Ovary (tissue), 10 donors: ENCODE measurements at regions of chr3 and their contacts with region 1.

Region 1: GRCh38 chr3:142993958-142994442 is 7.4 kb upstream of the U2SURP start:
- DNase-seq: peak; percentile 19 to 69 (median 52)
- H3K4me3 ChIP-seq: no peak overlapping the region
- H3K27ac ChIP-seq: no peak overlapping the region
- H3K4me1 ChIP-seq: no peaks in the 10 kb centered on the region
- H3K27me3 ChIP-seq: no peaks in the 10 kb centered on the region
- CTCF ChIP-seq: peak in 2 of 3 donors; percentile 23 to 39
- EP300 ChIP-seq: no peak
- POLR2A ChIP-seq: no peak

Region 2: DNA sequence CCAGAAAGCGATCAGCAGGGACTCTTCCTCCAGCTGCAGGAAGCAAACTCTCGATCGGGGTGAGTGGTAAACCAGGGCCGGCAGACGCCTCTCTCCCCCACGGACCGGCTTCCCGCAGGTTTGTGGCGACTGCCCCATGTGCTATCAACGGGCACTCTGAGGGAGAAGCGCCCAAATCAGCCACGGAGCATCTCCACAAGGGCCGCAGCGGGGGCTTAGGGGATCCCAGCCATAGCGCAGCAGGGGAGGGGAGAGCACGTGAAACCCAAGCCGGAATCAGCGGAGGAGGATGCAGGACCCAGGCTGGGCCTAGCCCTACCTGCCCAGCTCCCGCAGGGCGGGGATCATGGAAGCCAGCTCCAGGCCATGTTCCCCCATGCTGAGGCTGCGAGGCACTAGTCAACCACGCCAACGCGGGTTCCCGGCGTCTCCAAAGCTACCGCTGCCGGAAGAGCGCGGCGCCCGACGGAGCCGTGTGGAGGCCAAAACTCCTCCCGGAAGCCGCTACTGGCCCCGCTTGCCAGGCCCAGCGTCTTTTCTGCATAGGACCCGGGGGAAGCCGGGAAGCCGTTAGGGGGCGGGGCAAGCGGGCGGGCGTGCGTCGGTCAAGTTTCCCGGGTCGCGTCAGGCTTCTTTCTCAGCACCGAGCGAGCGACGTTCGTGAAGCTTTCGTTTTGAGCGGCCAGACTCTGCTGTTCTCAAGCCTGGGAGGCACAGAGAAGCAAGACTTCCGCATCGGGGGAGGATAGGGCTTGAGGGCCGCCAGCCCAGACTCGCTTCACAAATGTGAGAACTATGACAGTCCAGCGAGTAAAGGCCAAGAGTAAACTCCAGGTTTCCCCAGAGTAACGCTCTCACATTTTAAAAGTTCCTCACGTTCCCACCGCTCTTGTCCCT is 415.4 kb before region 1 on chr3 and contains the start of gene ATR:
- intact Hi-C with region 1: loop called in 3 of 4 experiments (anchors 10 kb)
- DNase-seq: peak; percentile 95 to 97 (median 96)
- H3K4me3 ChIP-seq: peak within 1 kb of the TSS; percentile 94
- H3K27ac ChIP-seq: peak within 1 kb of the TSS; percentile 69 to 93
- H3K4me1 ChIP-seq: peaks cover 7% of the 10 kb centered on the region
- H3K27me3 ChIP-seq: no peaks in the 10 kb centered on the region
- CTCF ChIP-seq: peak in 1 of 3 donors; percentile 29
- EP300 ChIP-seq: no peak
- POLR2A ChIP-seq: peak; percentile 62
- total RNA-seq, gene ATR: 13.6 to 23.4 (median 19.1) TPM

Region 3: GRCh38 chr3:142586803-142587406 is 407.1 kb before region 1 on chr3:
- intact Hi-C with region 1: loop called in 2 of 4 experiments (anchors 10 kb)
- DNase-seq: no peak
- H3K4me3 ChIP-seq: no peak overlapping the region
- H3K27ac ChIP-seq: no peak overlapping the region
- H3K4me1 ChIP-seq: no peaks in the 10 kb centered on the region
- H3K27me3 ChIP-seq: no peaks in the 10 kb centered on the region
- CTCF ChIP-seq: peak in 1 of 3 donors; percentile 34
- EP300 ChIP-seq: no peak
- POLR2A ChIP-seq: no peak

Region 4: DNA sequence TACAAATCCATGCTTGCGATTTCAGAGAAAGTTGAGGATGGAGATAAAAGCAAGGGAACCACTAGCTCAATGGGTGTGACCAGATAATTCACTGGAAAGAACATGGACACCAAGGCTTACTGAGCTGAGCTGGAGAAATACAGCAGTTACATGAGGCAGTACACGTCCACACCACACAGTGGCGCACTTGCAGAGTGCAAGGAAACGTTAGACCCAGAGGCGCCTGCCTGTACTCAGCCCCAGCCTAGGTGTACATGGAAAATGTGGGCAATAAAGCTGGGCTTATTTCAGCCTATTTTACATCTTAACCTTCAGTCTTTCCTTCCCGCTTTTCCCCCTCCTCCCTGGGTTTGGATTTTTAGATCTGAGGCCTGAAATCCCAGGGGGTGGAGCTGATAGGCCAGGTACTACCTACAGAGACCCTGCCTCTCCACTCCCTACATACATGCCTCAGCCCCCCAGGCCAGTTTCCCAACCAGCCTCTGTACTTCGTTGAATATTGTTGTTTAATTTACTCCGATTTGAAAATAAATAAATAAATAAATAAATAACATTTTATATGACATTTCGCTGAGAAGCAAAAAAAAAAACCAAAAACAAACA is 165.2 kb before region 1 on chr3:
- intact Hi-C with region 1: loop called in 2 of 4 experiments (anchors 5 kb)
- DNase-seq: peak; percentile 68 to 90 (median 81)
- H3K4me3 ChIP-seq: no peak overlapping the region
- H3K27ac ChIP-seq: no peak overlapping the region
- H3K4me1 ChIP-seq: no peaks in the 10 kb centered on the region
- H3K27me3 ChIP-seq: no peaks in the 10 kb centered on the region
- CTCF ChIP-seq: peak; percentile 40 to 65 (median 53)
- EP300 ChIP-seq: no peak
- POLR2A ChIP-seq: no peak

Region 5: GRCh38 chr3:142929109-142929508 is 64.9 kb before region 1 on chr3:
- intact Hi-C with region 1: no loop called
- DNase-seq: no peak
- H3K4me3 ChIP-seq: no peak overlapping the region
- H3K27ac ChIP-seq: no peak overlapping the region
- H3K4me1 ChIP-seq: no peaks in the 10 kb centered on the region
- H3K27me3 ChIP-seq: no peaks in the 10 kb centered on the region
- CTCF ChIP-seq: no peak
- EP300 ChIP-seq: no peak
- POLR2A ChIP-seq: no peak